ENCODE measurements at regions of chr6 and their contacts with region 1.

Region 1: DNA sequence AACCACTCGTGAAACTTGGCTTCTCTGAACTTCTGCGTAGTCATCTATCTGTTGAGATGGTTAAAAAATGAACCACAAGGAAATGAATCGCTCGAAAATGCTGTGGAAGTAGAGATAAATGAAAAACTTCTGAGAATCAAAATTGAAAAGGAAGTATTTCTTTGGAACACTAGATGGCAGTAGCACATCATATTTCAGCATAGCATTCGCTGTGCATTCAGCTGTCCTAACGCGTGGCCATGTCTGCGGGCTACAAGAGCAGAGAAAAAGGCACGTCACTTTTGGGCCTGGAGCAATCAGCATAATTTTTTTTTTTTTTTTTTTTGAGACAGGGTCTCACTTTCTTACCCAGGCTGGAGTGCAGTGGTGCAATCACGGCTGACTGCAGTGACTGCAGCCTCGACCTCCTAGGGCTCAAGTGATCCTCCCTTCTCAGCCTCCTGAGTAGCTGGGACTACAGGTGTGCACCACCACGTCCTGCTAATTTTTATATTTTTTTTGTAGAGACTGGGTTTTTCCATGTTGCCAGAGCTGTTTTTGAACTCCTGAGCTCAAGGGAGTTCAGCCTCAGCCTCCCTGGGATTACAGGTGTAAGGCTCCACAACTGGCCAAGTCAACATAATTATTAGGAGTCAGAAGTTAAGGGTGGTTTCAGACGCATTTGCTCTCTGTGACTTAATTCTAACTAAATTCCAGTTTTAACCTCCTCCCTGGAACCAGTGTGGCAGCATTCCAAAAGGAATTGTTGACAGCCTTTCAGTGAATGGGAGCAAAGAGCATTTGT is 8.8 kb upstream of the PERP start:
- DNase-seq: peak; percentile 55
- ATAC-seq: peak; percentile 87 to 91

Region 2: DNA sequence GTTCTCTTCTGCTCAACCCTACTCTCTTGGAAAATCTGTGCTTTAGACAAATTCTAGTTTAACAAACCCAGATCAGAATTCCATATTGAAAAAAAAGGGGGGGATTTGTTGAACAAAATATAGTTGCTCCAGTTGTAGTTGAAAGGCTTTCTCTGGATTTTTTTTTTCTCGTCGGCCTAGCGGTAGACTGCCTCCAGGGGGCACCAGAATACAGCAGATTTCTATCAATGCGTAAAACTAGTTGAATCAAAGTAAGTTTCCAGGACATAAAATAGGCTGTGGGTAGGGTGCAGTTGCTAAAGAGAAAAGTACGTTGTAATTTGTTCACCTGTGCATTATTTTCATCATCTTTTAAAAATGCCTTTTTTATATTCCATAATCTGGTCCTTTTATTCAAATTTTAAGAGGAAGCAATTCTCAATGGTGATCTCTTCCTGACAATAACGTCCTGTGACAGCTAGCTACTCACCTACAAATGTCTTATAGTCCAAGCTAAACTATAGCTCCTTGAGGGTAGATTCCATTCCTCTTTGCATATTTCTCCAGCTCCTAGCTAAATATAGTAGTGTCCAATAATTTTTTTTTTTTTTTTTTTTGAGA is 114.2 kb before region 1 on chr6:
- intact Hi-C with region 1: loop called in 1 of 2 experiments (anchors 5 kb)
- DNase-seq: peak; percentile 56
- ATAC-seq: peak; percentile 41 to 42

Region 3: GRCh38 chr6:138278326-138278725 is 162.3 kb after region 1 on chr6:
- intact Hi-C with region 1: loop called (anchors 2 to 5 kb)
- DNase-seq: no peak
- ATAC-seq: peak; percentile 63 to 76

Region 4: GRCh38 chr6:138403801-138404661 is 288.0 kb after region 1 on chr6 and contains the start of gene HEBP2:
- intact Hi-C with region 1: loop called in 1 of 2 experiments (anchors 10 kb)
- DNase-seq: peak; percentile 95
- ATAC-seq: peak; percentile 90 to 95
- total RNA-seq, gene HEBP2: 84.9 to 111 TPM

Region 5: DNA sequence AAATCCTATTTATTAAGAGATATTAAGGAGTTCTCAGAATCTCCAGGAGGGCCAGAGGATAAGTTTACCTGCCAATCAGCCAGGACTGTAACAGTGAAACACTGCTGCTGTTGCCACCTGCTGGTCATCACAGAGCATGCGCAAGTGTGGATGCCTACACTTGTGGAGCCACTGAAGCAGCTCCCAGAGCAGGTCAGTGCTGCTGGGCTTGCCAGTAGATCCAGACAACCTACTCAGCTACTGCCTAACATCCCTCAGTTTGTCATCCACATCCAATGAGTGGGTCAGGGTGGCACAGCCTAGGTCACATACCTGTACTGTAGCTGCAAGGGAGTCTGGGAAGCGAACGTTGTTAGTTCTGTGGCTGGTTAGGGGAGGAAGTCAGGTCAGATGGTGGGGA is 401.6 kb after region 1 on chr6:
- intact Hi-C with region 1: loop called in 1 of 2 experiments (anchors 10 kb)
- DNase-seq: no peak
- ATAC-seq: peak in 1 of 2 donors; percentile 41

Region 6: GRCh38 chr6:138588805-138589434 is 472.9 kb after region 1 on chr6:
- intact Hi-C with region 1: loop called in 1 of 2 experiments (anchors 5 kb)
- DNase-seq: peak; percentile 49
- ATAC-seq: peak; percentile 53 to 67

Region 7: GRCh38 chr6:138765896-138766655 is 650.0 kb after region 1 on chr6:
- intact Hi-C with region 1: loop called (anchors 2 to 5 kb)
- DNase-seq: no peak
- ATAC-seq: no peak

Measured in left cardiac atrium (tissue), 4 donors.